A673 (cell line): ENCODE measurements at regions of chrX and their contacts with region 1.

Region 1: DNA sequence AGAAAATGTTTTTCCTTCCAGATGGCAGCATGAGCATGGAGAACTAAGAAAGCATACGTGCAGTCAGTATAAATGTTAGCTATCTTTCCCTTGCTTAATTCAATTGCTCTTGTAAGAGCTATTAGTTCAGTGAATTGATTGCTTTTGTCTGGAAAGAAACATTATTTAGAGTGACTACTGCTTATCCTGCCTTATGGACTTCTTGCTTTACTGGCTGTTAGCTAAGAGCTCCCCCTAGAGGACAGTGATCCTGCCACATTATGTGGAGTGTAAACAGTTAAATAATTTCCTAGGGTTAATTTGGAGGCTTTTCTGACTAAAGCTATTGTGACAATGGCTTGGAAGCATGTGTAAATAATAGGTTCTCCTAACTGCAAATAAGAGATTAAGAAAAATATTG is 1402.4 kb downstream of the FAM133A start:
- DNase-seq: peak; percentile 59
- H3K4me3 ChIP-seq: no peak overlapping the region
- H3K27ac ChIP-seq: no peak overlapping the region
- H3K4me1 ChIP-seq: no peaks in the 10 kb centered on the region
- H3K27me3 ChIP-seq: no peaks in the 10 kb centered on the region
- CTCF ChIP-seq: peak; percentile 72

Region 2: DNA sequence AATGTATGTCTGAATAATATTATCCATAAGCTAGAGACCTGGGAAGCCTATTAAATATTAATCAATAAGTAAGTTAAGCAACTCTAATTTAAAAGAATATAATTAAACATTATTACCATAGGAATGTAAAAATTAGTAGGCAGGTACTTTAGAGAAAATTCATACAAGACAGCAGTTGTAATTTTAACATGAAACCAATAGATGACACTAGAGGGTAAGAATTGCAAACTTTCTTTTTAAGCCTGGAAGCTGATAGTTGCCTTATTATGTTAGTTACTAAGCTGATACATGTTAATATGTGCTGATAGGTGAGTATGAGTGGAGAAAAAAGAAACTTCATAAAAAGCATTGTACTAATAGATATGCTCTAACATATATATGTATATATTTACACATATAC is 245.1 kb before region 1 on chrX:
- CTCF ChIA-PET with region 1: no interaction called
- POLR2A ChIA-PET with region 1: no interaction called
- intact Hi-C with region 1: loop called (anchors 10 kb)
- DNase-seq: peak; percentile 25
- H3K4me3 ChIP-seq: no peak overlapping the region
- H3K27ac ChIP-seq: no peak overlapping the region
- H3K4me1 ChIP-seq: no peaks in the 10 kb centered on the region
- H3K27me3 ChIP-seq: no peaks in the 10 kb centered on the region
- CTCF ChIP-seq: peak; percentile 55